Dorsolateral prefrontal cortex (tissue), 120 donors: ENCODE measurements at regions of chr5 and their contacts with region 1.

Region 1: DNA sequence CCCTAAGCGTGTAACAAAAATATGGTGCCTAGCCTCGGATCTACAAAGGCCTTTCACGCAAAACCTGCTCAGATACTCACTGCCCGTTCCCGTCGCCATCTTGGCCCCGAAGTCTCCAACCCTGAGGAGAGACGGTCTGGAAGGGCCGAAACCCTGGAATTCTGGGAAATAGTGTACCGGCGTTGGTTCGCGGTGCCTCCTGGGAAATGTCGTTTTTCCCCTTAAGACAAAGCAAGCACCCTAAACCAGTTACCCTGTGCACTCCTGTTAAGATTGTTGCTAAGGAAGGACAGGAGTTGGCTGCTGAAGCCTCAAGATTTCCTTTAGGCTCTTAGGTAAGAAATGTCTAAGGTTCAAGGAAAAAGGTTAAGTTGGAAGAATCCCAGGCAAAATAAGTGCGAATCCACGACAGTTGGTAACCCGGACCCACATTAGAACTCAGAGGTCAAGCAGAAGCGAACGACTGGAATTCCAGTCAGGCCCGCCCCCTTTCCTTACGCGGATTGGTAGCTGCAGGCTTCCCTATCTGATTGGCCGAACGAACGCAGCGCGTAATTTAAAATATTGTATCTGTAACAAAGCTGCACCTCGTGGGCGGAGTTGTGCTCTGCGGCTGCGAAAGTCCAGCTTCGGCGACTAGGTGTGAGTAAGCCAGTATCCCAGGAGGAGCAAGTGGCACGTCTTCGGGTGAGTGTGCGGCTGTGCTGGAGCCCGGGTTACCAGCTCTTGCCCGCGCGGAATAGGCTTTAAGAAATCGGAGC is at the starts of genes BRD8 and KIF20A:
- DNase-seq: peak; percentile 86 to 99 (median 97)
- H3K4me3 ChIP-seq: peak within 1 kb of the TSS; percentile 59 to 98 (median 86)
- H3K27ac ChIP-seq: peak within 1 kb of the TSS; percentile 82 to 98 (median 94)
- H3K27me3 ChIP-seq: no peaks in the 10 kb centered on the region
- CTCF ChIP-seq: peak in 20 of 56 donors; percentile 4 to 45 (median 24)
- total RNA-seq, gene BRD8: 75.7 to 137 (median 102) TPM
- total RNA-seq, gene KIF20A: 0.16 to 1.9 (median 0.61) TPM in 18 of 120 experiments, not detected in the others

Region 2: DNA sequence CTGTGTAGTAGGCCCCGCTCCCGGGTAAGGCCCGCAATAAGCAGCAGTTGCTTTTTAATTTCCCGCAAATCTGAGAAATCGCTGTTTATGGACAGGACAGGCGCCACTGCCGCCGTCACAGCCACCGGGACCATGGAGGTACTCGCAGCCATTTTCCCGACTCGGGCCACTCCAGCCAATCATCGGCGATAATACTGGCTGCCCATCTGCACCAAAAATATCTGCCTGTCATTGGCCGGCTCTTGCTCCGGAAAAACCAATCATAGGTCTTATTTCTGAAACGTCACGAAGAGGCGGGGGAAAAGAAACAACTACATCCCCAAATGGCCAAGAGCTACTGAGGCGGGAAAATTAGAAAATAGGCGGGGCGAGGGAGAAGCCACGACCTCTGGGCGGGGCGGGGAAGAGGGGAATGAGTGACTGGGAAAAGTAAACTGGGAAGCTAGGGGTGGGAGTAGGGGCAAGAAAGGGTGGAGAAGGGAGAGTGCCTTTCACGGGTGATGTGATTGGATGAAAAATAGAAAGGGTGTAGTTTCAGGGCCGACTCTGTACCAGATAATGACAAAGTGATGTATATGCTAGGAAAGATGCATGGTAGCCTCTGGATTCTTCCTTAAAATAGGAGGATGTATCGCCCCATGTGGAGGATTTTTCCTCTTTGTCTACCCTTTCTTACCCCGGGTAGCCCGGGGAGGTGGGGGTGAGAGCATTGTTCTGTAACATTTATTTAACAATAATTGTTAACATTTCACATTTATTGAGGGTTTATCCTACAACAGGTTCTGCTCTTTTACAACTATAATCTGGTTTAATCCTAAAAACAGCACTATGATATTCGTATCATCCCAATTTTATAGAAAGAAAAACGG is 34.7 kb after region 1 on chr5 and contains the start of gene CDC23:
- intact Hi-C with region 1: loop called in 1 of 2 experiments (anchors 5 kb)
- DNase-seq: peak; percentile 79 to 96 (median 92)
- H3K4me3 ChIP-seq: peak within 1 kb of the TSS; percentile 69 to 100 (median 92)
- H3K27ac ChIP-seq: peak within 1 kb of the TSS in 50 of 59 donors; percentile 10 to 94 (median 72)
- H3K27me3 ChIP-seq: no peaks in the 10 kb centered on the region
- CTCF ChIP-seq: peak in 8 of 56 donors; percentile 11 to 46 (median 24)
- total RNA-seq, gene CDC23: 17.3 to 35.9 (median 25.7) TPM

Region 3: GRCh38 chr5:138337685-138338410 is 159.2 kb after region 1 on chr5 and contains the start of gene FAM53C:
- intact Hi-C with region 1: loop called in 1 of 2 experiments (anchors 5 kb)
- DNase-seq: peak; percentile 80 to 95 (median 90)
- H3K4me3 ChIP-seq: peak within 1 kb of the TSS; percentile 62 to 98 (median 91)
- H3K27ac ChIP-seq: peak within 1 kb of the TSS; percentile 93 to 100 (median 100)
- H3K27me3 ChIP-seq: no peaks in the 10 kb centered on the region
- CTCF ChIP-seq: peak in 17 of 56 donors; percentile 0 to 40 (median 24)
- total RNA-seq, gene FAM53C: 31.8 to 57.6 (median 42.1) TPM

Region 4: GRCh38 chr5:138536665-138537315 is 358.1 kb after region 1 on chr5:
- intact Hi-C with region 1: loop called in 1 of 2 experiments (anchors 10 kb)
- DNase-seq: no peak
- H3K4me3 ChIP-seq: no peak overlapping the region
- H3K27ac ChIP-seq: peak overlapping the region in 16 of 59 donors; percentile 1 to 46 (median 12)
- H3K27me3 ChIP-seq: no peaks in the 10 kb centered on the region
- CTCF ChIP-seq: peak in 22 of 56 donors; percentile 1 to 40 (median 20)